ENCODE measurements at regions of chr10 and their contacts with region 1.

Region 1: DNA sequence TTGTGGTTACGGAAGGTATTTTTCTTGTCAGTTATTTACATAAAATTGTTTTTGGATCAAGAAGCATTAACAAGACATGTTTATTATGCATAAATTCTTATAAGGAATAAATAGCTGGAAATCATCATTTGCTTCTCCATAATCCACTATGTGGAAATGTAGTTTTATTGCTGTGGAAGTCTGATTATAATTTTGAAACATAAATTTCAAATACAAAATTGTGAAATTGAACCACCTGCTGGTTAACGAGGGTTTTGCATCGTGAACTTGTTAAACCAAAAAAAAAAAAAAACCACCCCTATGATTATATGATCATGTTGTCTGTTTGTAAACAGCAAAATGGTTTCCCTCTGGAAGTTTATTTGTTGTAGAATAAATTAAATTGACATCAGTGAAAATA is 25.9 kb downstream of the ABRAXAS2 start:
- DNase-seq: no peak
- H3K4me3 ChIP-seq: no peak overlapping the region
- H3K27ac ChIP-seq: no peak overlapping the region
- H3K4me1 ChIP-seq: no peaks in the 10 kb centered on the region
- H3K27me3 ChIP-seq: no peaks in the 10 kb centered on the region
- CTCF ChIP-seq: peak; percentile 23 to 62 (median 26)
- EP300 ChIP-seq: no peak
- POLR2A ChIP-seq: no peak

Region 2: DNA sequence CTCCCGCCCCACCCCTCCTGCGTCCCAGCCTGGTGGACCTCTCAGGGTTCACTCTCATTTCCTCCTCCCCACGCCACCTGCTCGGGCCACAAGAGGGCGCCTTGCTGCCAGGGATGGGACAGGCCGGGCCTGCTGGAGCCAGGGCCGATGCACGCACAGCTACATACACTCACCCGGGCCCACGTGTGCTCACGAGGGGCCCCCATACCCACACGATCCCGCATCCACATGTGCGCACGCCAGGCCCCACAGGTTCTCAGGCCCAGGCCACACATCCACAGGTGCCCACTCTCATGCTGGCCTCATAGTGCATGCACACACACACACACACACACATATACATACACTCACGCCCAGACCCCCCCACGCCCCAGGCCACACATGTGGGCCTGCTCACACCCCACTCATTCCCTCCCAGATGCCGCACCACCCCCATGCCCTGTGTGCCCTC is 297.2 kb before region 1 on chr10:
- intact Hi-C with region 1: loop called (anchors 2 kb)
- DNase-seq: peak; percentile 93
- H3K4me3 ChIP-seq: no peak overlapping the region
- H3K27ac ChIP-seq: peak overlapping the region in 2 of 4 donors; percentile 54 to 58
- H3K4me1 ChIP-seq: peaks cover 0 to 31% (median 19%) of the 10 kb centered on the region in 4 donors
- H3K27me3 ChIP-seq: no peaks in the 10 kb centered on the region
- CTCF ChIP-seq: peak; percentile 88 to 95 (median 90)
- EP300 ChIP-seq: no peak
- POLR2A ChIP-seq: no peak

Region 3: GRCh38 chr10:124732931-124733570 is 94.4 kb before region 1 on chr10:
- intact Hi-C with region 1: no loop called
- DNase-seq: peak; percentile 87
- H3K4me3 ChIP-seq: no peak overlapping the region
- H3K27ac ChIP-seq: peak overlapping the region; percentile 86 to 94 (median 89)
- H3K4me1 ChIP-seq: peaks cover 0 to 100% (median 90%) of the 10 kb centered on the region in 4 donors
- H3K27me3 ChIP-seq: no peaks in the 10 kb centered on the region
- CTCF ChIP-seq: no peak
- EP300 ChIP-seq: no peak
- POLR2A ChIP-seq: no peak

Region 4: DNA sequence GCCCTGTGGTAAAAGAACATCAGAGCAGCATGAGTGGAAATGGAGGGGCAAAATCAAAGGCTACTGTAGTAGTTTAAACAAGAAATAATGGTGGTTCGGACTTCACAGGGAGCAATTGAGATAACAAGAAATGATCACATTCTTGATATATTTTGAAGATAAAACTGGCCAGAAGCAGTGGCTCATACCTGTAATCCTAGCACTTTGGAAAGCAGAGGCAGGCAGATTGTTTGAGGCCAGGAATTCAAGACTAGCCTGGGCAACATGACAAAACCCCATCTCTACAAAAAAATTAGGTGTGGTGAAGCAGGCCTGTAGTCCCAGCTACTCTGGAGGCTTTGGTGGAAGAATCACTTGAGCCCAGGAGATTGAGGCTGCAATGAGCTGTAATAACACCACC is 58.7 kb before region 1 on chr10:
- intact Hi-C with region 1: no loop called
- DNase-seq: no peak
- H3K4me3 ChIP-seq: no peak overlapping the region
- H3K27ac ChIP-seq: no peak overlapping the region
- H3K4me1 ChIP-seq: no peaks in the 10 kb centered on the region
- H3K27me3 ChIP-seq: no peaks in the 10 kb centered on the region
- CTCF ChIP-seq: no peak
- EP300 ChIP-seq: no peak
- POLR2A ChIP-seq: no peak